GM13977 (cell line): ENCODE measurements at regions of chr1 and their contacts with region 1.

Region 1: DNA sequence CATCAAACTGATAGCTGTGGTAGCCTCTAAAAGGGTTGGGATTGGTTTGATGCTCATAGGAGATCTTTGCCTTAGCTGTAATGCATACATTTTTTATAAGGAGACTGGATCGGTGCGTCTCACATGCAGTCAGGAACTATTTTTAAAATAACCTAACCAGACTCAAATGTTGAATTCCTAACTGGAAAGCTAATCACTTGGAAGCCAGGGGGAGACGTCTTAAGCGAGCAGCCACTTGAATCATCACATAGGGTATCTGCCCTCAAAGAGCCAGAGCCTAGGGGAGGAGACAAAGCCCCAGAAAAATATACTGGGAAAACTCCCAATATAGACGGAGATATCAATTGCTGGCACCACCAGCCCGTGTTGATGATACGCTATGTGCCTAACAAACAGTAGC is 61.7 kb upstream of the PUM1 start:
- DNase-seq: no peak
- CTCF ChIP-seq: no peak

Region 2: GRCh38 chr1:31027693-31028526 is 99.4 kb before region 1 on chr1:
- in situ Hi-C with region 1: loop called (anchors 25 kb)
- DNase-seq: peak; percentile 43
- CTCF ChIP-seq: no peak

Region 3: GRCh38 chr1:31336687-31337467 is 209.6 kb after region 1 on chr1:
- in situ Hi-C with region 1: no loop called
- DNase-seq: no peak
- CTCF ChIP-seq: no peak

Region 4: DNA sequence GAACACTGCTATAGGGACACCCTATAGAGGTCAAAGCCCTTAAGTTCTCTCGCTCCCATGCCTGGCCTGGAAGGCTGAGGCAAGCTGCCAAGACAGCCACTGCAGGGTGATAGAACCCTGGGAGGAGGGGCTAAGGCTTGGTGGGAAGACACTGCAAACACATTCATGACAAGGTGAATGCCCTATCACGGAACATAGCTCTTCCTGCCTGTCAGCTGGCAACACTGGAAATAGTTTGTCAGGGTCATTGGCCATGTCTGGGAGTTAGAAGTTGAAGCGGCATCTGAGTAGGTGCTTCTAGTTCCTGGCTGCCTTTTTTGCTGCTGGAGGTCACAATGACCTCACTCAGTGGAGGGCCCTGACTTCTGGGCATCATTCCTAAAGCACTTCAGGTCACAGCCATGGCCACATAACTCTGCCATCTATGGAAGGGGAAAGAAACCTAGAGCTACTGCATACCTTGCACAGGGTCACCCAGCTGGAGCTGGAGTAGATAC is 241.4 kb after region 1 on chr1:
- in situ Hi-C with region 1: no loop called
- DNase-seq: no peak
- CTCF ChIP-seq: no peak

Region 5: GRCh38 chr1:31605908-31606427 is 478.7 kb after region 1 on chr1:
- in situ Hi-C with region 1: no loop called
- DNase-seq: peak; percentile 88
- CTCF ChIP-seq: no peak